ENCODE measurements at regions of chr16 and their contacts with region 1.

Region 1: GRCh38 chr16:11224096-11224893 is 31.7 kb downstream of the SOCS1 start:
- DNase-seq: peak; percentile 34
- ATAC-seq: peak; percentile 31
- H3K4me3 Mint-ChIP-seq: peak overlapping the region; percentile 69
- H3K27ac Mint-ChIP-seq: peak overlapping the region; percentile 83
- H3K4me1 Mint-ChIP-seq: peaks cover 37% of the 10 kb centered on the region
- H3K27me3 Mint-ChIP-seq: no peaks in the 10 kb centered on the region
- CTCF ChIP-seq: no peak

Region 2: DNA sequence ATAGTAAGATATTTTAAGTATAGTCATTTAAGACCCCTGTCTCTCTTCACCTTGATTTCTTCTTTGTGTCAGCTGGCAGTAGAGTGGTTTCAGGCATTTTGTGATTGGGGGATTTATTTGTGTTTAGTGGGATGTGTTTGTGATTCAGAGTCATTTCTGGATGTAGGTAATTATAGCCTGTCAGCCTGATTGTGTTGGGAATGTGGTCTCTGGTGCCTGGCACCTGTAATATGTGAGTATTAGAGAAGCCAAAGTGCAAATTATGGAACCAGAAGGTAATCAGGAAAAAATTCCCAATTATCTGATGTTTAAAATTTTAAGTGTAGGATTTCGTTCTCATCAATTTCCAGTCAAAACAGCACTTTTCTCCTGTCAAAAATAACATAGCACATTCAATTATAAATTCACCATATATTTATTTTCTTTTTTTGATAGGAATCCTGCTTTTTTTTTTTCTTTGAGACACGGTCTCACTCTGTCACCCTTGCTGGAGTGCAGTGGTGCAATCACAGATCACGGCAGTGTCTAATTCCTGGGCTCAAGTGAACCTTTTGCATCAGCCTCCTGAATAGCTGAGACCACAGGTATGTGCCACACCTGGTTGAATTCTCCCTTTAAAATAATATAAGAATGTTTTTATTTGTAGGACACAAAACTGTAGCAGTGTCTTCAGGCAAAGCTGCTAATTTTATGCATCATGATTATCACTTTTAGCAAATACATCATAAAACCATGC is 795.7 kb before region 1 on chr16:
- CTCF ChIA-PET with region 1: no interaction called
- POLR2A ChIA-PET with region 1: no interaction called
- intact Hi-C with region 1: no loop called
- DNase-seq: no peak
- ATAC-seq: no peak
- H3K4me3 Mint-ChIP-seq: no peak overlapping the region
- H3K27ac Mint-ChIP-seq: no peak overlapping the region
- H3K4me1 Mint-ChIP-seq: no peaks in the 10 kb centered on the region
- H3K27me3 Mint-ChIP-seq: no peaks in the 10 kb centered on the region
- CTCF ChIP-seq: no peak

Region 3: GRCh38 chr16:11181899-11182279 is 42.4 kb before region 1 on chr16:
- CTCF ChIA-PET with region 1: interaction called, 3 read pairs
- POLR2A ChIA-PET with region 1: interaction called, 36 read pairs
- intact Hi-C with region 1: loop called (anchors 1 kb)
- DNase-seq: no peak
- ATAC-seq: peak; percentile 35
- H3K4me3 Mint-ChIP-seq: peak overlapping the region; percentile 64
- H3K27ac Mint-ChIP-seq: peak overlapping the region; percentile 87
- H3K4me1 Mint-ChIP-seq: peaks cover 58% of the 10 kb centered on the region
- H3K27me3 Mint-ChIP-seq: no peaks in the 10 kb centered on the region
- CTCF ChIP-seq: no peak

Region 4: DNA sequence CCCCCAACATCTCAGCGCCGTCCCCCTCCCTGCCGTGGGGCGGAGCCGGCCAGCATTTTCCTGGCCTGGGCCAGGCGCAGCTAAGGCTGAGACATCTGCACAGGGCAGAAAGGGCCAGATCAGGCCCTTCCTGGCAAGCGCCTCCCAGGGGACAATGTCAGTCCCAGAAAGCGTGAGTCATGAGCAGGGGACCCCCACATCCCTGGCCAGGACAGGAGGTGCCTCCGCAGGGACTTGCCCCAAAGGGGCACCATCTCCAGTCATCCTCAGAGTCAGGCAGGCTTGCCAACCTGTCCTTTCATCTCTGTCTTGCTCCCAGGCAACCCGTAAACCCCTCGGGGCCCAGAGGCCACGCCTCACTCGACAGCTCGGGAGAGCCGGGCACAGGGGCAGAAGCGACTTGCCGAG is 11.5 kb before region 1 on chr16:
- CTCF ChIA-PET with region 1: interaction called, 3 read pairs
- POLR2A ChIA-PET with region 1: interaction called, 31 read pairs
- intact Hi-C with region 1: no loop called
- DNase-seq: peak; percentile 31
- ATAC-seq: peak; percentile 76
- H3K4me3 Mint-ChIP-seq: no peak overlapping the region
- H3K27ac Mint-ChIP-seq: no peak overlapping the region
- H3K4me1 Mint-ChIP-seq: peaks cover 18% of the 10 kb centered on the region
- H3K27me3 Mint-ChIP-seq: peaks cover 7% of the 10 kb centered on the region
- CTCF ChIP-seq: no peak

Region 5: GRCh38 chr16:11328172-11329070 is 104.1 kb after region 1 on chr16:
- CTCF ChIA-PET with region 1: no interaction called
- POLR2A ChIA-PET with region 1: interaction called, 4 read pairs
- intact Hi-C with region 1: loop called (anchors 1 kb)
- DNase-seq: peak; percentile 66
- ATAC-seq: peak; percentile 65
- H3K4me3 Mint-ChIP-seq: peak overlapping the region; percentile 80
- H3K27ac Mint-ChIP-seq: peak overlapping the region; percentile 94
- H3K4me1 Mint-ChIP-seq: peaks cover 72% of the 10 kb centered on the region
- H3K27me3 Mint-ChIP-seq: no peaks in the 10 kb centered on the region
- CTCF ChIP-seq: no peak